ENCODE measurements at regions of chr7 and their contacts with region 1.

Region 1: DNA sequence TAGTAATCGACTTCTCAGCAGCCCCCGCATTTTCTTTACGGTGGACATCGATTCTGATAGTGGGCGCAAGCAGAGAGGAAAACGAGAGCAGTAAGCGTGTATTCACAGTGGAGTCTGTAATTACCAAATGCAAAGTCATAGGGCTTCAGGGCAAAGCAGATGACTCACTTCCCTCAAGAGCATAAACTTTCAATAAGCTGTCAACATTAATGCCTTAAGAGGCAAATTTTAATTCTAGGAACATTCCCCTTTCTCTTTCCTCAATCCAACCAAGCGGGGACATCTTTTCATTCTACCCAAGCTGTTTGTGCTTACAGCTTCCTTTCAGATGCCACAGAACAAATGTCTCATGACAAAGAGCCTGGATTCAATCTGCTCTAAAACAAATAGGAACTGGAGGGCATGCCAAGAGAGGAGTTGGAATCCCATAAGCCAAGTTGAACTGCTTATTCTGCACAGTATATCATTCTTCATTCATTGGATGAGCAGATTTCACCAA is 48.6 kb downstream of the MALSU1 start:
- DNase-seq: peak; percentile 80
- H3K4me3 ChIP-seq: peak overlapping the region in 2 of 3 experiments; percentile 19 to 39
- H3K27ac ChIP-seq: peak overlapping the region; percentile 77
- H3K4me1 ChIP-seq: peaks cover 39% of the 10 kb centered on the region
- H3K27me3 ChIP-seq: no peaks in the 10 kb centered on the region
- CTCF ChIP-seq: no peak

Region 2: GRCh38 chr7:22417349-22417748 is 930.4 kb before region 1 on chr7:
- CTCF ChIA-PET with region 1: no interaction called
- dilution Hi-C with region 1: no loop called
- in situ Hi-C with region 1: no loop called
- intact Hi-C with region 1: no loop called
- DNase-seq: no peak
- H3K4me3 ChIP-seq: no peak overlapping the region
- H3K27ac ChIP-seq: no peak overlapping the region
- H3K4me1 ChIP-seq: peaks cover 4% of the 10 kb centered on the region
- H3K27me3 ChIP-seq: no peaks in the 10 kb centered on the region
- CTCF ChIP-seq: no peak

Region 3: DNA sequence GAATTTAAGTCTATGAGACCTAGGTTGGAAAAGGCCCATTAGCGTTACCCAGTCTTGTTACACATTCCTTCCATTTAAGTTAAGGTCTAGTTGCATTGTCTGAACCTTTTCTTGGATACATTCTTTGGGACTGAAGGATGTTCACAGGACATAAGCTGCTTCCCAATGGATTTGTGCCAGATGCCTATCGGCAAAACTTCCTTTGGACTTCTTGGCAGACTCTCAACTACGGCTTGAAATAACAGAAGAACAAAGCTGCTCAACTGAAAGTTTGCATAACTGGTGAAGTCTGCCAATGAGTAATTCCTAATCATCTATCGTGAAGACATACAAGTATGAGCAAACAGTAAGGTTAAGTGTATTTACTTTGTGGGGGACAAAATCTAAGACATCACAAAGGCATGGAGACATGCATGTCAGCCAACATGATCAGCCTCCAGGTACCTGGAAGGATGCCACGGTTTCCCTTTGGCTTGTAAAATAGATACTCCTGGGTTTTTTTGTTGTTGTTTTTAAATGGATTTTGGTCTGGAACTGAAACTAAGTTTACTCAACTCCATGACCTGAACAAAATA is 13.2 kb before region 1 on chr7:
- CTCF ChIA-PET with region 1: no interaction called
- dilution Hi-C with region 1: no loop called
- in situ Hi-C with region 1: no loop called
- intact Hi-C with region 1: loop called (anchors 1 kb)
- DNase-seq: peak; percentile 97
- H3K4me3 ChIP-seq: no peak overlapping the region
- H3K27ac ChIP-seq: peak overlapping the region; percentile 6
- H3K4me1 ChIP-seq: peaks cover 30% of the 10 kb centered on the region
- H3K27me3 ChIP-seq: no peaks in the 10 kb centered on the region
- CTCF ChIP-seq: no peak

Region 4: DNA sequence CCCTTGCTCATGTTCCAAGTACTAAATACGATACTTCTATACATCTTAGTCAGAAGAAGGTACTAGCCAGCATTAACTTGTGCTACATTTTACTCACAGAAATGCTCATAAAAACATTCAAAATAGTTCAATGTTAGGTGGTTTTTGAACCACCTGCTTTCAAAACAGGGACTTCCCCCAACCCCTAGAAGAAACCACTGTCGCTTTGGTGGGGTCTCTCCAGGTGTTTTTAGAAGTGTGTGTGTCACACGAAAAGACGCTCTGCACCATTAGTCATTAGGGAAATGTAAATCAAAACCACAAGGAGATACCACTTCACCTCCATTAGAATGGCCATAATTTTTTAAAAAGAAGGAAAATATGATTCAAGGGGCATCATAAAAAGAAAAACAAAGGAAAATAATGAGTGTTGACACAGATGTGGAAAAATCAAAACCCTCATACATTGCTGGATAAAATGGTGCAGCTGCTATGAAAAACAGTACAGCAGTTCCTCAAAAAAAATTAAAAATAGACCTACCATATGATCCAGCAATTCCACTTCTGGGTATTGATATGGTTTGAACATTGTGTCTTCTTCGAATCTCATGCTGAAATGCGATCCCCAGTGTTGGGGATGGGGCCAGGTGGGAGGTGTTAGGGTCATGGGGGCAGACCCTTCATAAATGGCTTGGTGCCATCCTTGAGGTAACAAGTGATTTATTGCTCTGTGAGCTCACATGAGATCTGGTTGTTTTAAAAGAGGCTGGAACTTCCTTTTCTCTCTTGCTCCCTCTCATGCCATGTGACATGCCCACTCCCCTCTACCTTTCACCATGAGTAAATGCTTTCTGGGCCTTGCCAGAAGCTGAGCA is 25.6 kb after region 1 on chr7:
- CTCF ChIA-PET with region 1: no interaction called
- dilution Hi-C with region 1: no loop called
- in situ Hi-C with region 1: no loop called
- intact Hi-C with region 1: no loop called
- DNase-seq: peak; percentile 52
- H3K4me3 ChIP-seq: no peak overlapping the region
- H3K27ac ChIP-seq: no peak overlapping the region
- H3K4me1 ChIP-seq: no peaks in the 10 kb centered on the region
- H3K27me3 ChIP-seq: no peaks in the 10 kb centered on the region
- CTCF ChIP-seq: no peak